Right ventricle myocardium inferior (tissue), 1 donor: ENCODE measurements at regions of chr5 and their contacts with region 1.

Region 1: DNA sequence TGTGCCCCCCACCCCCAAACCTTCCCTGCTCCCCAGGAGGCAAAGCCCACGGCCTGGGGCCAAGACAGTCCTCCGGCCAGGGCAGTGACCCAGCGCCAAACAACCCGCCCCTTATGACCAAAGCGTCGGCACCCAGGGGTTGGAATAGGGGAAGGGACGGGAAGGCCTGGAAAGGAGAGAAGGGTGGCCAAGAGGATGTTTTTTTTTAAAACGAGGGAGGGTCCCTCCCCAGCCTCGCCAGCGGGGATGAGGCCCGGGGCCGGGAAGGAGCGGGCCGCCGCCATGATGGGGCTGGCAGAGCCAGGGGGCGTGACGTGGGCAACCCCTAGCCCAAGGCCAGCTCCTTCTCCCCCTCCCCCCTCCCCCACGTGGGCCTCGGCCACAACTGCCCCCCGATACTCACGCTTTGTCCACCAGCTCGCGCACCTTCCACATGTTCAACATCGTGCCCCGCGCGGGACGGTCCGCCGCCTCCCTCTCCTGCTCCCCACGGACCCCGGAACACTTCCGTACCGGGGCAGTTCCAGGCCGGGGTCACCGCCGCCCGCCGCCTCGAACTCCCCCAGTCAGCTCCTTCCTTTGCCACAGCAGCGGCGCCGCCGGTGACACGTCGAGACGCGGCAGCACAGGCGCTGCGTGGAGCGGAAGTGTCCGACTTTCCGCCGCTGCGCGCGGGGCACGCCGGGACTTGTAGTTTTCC is at the start of gene CLINT1:
- DNase-seq: peak; percentile 98
- ATAC-seq: peak; percentile 97
- total RNA-seq, gene CLINT1: 56.5 TPM

Region 2: GRCh38 chr5:157820593-157821252 is 38.0 kb before region 1 on chr5:
- intact Hi-C with region 1: loop called (anchors 2 kb)
- DNase-seq: no peak
- ATAC-seq: no peak

Region 3: GRCh38 chr5:157917899-157918809 is 59.5 kb after region 1 on chr5:
- intact Hi-C with region 1: loop called (anchors 5 kb)
- DNase-seq: no peak
- ATAC-seq: peak; percentile 32

Region 4: DNA sequence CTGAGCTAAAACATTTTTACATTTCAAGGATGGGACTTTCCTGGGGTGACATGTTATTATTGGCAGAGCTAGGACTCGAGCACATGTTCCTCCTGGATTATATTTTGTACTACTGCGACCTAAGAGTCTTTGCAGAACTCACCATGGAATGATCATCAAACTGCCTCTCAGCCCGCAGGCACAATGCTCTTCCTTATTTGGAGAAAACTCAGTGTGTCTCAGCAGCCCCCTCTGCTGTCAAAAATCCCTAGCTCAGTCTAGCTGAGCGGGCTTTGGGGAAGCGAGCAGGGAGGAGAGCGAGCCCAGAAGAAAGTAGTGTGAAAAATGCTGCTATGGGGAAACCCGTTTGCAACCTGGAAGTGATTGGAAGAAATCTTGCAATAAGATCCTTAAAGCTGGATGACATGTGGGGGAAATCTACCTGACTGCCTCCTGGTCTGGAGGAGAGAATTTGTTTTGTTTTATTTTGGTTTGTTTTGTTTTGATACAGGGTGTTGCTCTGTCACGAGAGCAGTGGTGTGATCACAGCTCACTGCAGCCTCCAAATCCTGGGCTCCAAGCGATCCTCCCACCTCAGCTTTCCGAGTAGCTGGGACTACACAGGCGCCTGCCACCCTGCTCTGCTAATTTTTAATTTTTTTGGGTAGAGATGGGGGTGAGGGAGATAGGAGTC is 90.2 kb after region 1 on chr5:
- intact Hi-C with region 1: loop called (anchors 1 kb)
- DNase-seq: peak; percentile 89
- ATAC-seq: peak; percentile 99

Region 5: GRCh38 chr5:157994906-157995519 is 136.3 kb after region 1 on chr5:
- intact Hi-C with region 1: loop called (anchors 10 kb)
- DNase-seq: peak; percentile 80
- ATAC-seq: peak; percentile 97